Activated T-helper 1 cell treated with anti-CD3 and anti-CD28 coated beads, Interleukin-12 subunit alpha, Interleukin-12 subunit beta, Interleukin-2, Interleukin-4 antibody, amounts not matched to agents 30 ng/mL and 10 ng/mL and 1 ng/mL, durations not matched to agents 14 hours and 24 hours and 36 hours (primary cell): ENCODE measurements at regions of chr7 and their contacts with region 1.

Region 1: DNA sequence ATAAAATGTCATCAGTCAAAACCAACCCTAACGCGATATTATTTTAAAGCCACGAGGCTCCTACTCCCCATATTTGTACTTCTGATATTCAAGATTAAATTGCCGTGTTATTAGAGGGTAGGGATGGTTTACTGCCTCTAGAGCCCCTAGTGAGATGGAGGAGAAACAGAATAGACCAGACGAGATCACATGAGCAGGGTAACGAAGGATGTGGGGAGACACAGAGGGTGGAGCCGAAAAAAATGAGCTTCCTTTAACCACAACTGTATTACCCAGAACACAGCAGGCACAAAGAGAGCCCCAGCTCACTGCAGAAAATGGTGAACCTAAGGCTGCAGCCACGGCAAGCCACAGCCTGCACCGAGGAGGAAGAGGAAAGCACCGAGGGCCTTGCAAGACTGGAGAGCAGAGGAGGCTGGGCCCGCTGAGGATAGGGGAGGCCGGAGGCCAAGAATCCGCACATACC is 14.3 kb downstream of the ZC3HAV1 start:
- DNase-seq: peak; percentile 86
- H3K4me3 Mint-ChIP-seq: peak overlapping the region; percentile 80
- H3K27ac Mint-ChIP-seq: peak overlapping the region; percentile 97
- H3K4me1 Mint-ChIP-seq: peaks cover 87% of the 10 kb centered on the region
- H3K27me3 Mint-ChIP-seq: no peaks in the 10 kb centered on the region

Region 2: DNA sequence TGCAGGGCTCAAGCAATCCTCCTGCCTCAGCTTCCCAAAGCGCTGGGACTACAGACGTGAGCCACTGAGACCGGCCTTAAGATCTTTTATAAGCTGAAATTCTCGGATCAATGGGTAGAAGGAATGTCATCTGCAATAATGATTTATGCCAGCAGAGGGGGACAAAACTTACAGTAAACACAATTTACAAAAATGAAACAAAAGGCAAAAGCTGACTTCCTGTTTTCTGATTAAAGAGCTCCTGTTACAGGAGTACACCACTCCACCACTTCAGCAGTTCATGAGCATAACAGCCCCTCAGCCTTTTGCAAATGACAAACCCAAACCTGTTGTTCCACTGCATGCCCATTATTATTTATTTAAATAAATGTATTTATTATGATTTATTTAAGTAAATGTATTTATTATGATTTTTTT is 208.7 kb before region 1 on chr7:
- intact Hi-C with region 1: no loop called
- DNase-seq: peak; percentile 47
- H3K4me3 Mint-ChIP-seq: no peak overlapping the region
- H3K27ac Mint-ChIP-seq: no peak overlapping the region
- H3K4me1 Mint-ChIP-seq: peaks cover 28% of the 10 kb centered on the region
- H3K27me3 Mint-ChIP-seq: peaks cover 7% of the 10 kb centered on the region

Region 3: DNA sequence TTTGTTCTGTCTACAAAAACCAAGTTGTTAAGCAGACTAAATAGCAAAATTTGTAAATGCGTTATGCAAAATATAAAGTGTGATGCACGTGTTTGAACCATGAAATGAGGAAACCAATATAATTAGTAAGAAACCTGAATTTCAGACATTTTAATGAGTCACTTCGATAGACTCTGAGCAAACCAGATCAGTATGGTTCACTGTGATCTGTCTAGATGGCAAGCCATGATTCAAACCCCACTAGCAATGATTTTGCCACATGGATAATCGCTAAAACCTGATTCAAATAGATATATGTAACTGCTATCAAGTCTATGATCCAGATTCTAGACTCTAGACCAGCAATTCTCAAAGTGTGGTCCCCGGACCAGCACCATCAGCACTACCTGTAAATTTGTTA is 10.5 kb before region 1 on chr7:
- intact Hi-C with region 1: loop called (anchors 1 kb)
- DNase-seq: no peak
- H3K4me3 Mint-ChIP-seq: no peak overlapping the region
- H3K27ac Mint-ChIP-seq: peak overlapping the region; percentile 88
- H3K4me1 Mint-ChIP-seq: peaks cover 84% of the 10 kb centered on the region
- H3K27me3 Mint-ChIP-seq: no peaks in the 10 kb centered on the region

Region 4: GRCh38 chr7:139109188-139109982 is 14.2 kb after region 1 on chr7 and contains the start of gene ZC3HAV1:
- intact Hi-C with region 1: loop called (anchors 1 kb)
- DNase-seq: peak; percentile 87
- H3K4me3 Mint-ChIP-seq: peak within 1 kb of the TSS; percentile 97
- H3K27ac Mint-ChIP-seq: peak within 1 kb of the TSS; percentile 98
- H3K4me1 Mint-ChIP-seq: peaks cover 38% of the 10 kb centered on the region
- H3K27me3 Mint-ChIP-seq: no peaks in the 10 kb centered on the region
- total RNA-seq, gene ZC3HAV1: 89.7 and 90.0 TPM in 2 replicates

Region 5: GRCh38 chr7:139230774-139231512 is 135.7 kb after region 1 on chr7 and contains the start of gene UBN2:
- intact Hi-C with region 1: loop called (anchors 1 kb)
- DNase-seq: peak; percentile 89
- H3K4me3 Mint-ChIP-seq: peak within 1 kb of the TSS; percentile 100
- H3K27ac Mint-ChIP-seq: peak within 1 kb of the TSS; percentile 97
- H3K4me1 Mint-ChIP-seq: peaks cover 32% of the 10 kb centered on the region
- H3K27me3 Mint-ChIP-seq: peaks cover 27% of the 10 kb centered on the region
- total RNA-seq, gene UBN2: 14.7 and 15.6 TPM in 2 replicates